Activated CD4-positive, alpha-beta T cell treated with anti-CD3 and anti-CD28 coated beads for 36 hours (primary cell): ENCODE measurements at regions of chr3 and their contacts with region 1.

Region 1: GRCh38 chr3:66407611-66408218 is 93.1 kb downstream of the LRIG1 start:
- DNase-seq: peak; percentile 85
- ATAC-seq: peak; percentile 97
- H3K4me3 Mint-ChIP-seq: no peak overlapping the region
- H3K27ac Mint-ChIP-seq: no peak overlapping the region
- H3K4me1 Mint-ChIP-seq: no peaks in the 10 kb centered on the region
- H3K27me3 Mint-ChIP-seq: no peaks in the 10 kb centered on the region

Region 2: DNA sequence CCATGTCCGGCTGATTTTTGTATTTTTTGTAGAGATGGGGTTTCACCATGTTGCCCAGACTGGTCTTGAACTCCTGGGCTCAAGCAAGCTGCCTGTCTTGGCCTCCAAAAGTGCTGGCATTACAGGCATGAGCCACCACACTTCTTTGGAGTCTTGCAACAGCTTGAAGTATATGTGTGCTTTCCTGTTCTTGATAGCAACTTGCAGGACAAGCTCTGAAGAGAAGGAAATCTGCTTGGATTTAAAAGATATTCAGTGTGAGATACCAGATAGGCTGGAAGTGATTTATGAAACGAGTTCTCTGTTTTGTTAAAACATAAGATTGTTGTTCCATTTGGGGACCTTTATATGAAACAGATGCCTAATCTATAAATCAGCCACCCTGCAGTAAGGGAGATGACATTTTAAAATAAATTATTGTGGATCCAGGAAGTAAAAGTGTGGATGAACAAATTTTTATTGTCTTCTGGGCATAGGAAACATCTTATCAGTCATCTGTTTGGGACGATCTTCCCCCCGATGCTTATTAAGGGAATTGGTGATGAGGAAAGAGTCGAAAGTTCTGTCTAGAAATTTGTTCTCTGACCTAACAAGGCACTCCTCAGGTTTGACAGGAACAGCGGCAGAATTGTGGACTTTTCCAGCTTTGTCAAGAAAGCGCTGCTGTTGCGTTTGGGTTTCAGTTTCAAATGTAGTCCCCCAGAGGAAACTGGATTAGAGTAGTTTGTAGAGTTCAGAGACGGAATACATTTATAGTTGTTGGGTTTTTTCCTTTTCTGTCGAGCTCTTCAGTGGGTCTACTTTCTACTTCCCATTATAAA is 315.3 kb before region 1 on chr3:
- CTCF ChIA-PET with region 1: no interaction called
- POLR2A ChIA-PET with region 1: no interaction called
- intact Hi-C with region 1: no loop called
- DNase-seq: no peak
- ATAC-seq: no peak
- H3K4me3 Mint-ChIP-seq: no peak overlapping the region
- H3K27ac Mint-ChIP-seq: no peak overlapping the region
- H3K4me1 Mint-ChIP-seq: no peaks in the 10 kb centered on the region
- H3K27me3 Mint-ChIP-seq: peaks cover 11% of the 10 kb centered on the region

Region 3: GRCh38 chr3:66822186-66823008 is 414.7 kb after region 1 on chr3:
- CTCF ChIA-PET with region 1: interaction called, 15 read pairs
- POLR2A ChIA-PET with region 1: no interaction called
- intact Hi-C with region 1: no loop called
- DNase-seq: peak; percentile 79
- ATAC-seq: peak; percentile 84
- H3K4me3 Mint-ChIP-seq: no peak overlapping the region
- H3K27ac Mint-ChIP-seq: no peak overlapping the region
- H3K4me1 Mint-ChIP-seq: no peaks in the 10 kb centered on the region
- H3K27me3 Mint-ChIP-seq: peaks cover 3% of the 10 kb centered on the region